ENCODE measurements at regions of chr1 and their contacts with region 1.

Region 1: GRCh38 chr1:229341774-229342655 is 832 bp downstream of the CCSAP start:
- DNase-seq: peak; percentile 93
- H3K4me3 Mint-ChIP-seq: peak overlapping the region; percentile 89
- H3K27ac Mint-ChIP-seq: peak overlapping the region; percentile 80
- H3K4me1 Mint-ChIP-seq: peaks cover 38% of the 10 kb centered on the region
- H3K27me3 Mint-ChIP-seq: peaks cover 21% of the 10 kb centered on the region
- CTCF ChIP-seq: no peak

Region 2: GRCh38 chr1:228998179-228998578 is 343.8 kb before region 1 on chr1:
- CTCF ChIA-PET with region 1: no interaction called
- POLR2A ChIA-PET with region 1: no interaction called
- intact Hi-C with region 1: no loop called
- DNase-seq: no peak
- H3K4me3 Mint-ChIP-seq: no peak overlapping the region
- H3K27ac Mint-ChIP-seq: no peak overlapping the region
- H3K4me1 Mint-ChIP-seq: peaks cover 17% of the 10 kb centered on the region
- H3K27me3 Mint-ChIP-seq: no peaks in the 10 kb centered on the region
- CTCF ChIP-seq: no peak

Region 3: GRCh38 chr1:229300099-229300757 is 41.8 kb before region 1 on chr1:
- CTCF ChIA-PET with region 1: no interaction called
- POLR2A ChIA-PET with region 1: no interaction called
- intact Hi-C with region 1: no loop called
- DNase-seq: peak; percentile 23
- H3K4me3 Mint-ChIP-seq: no peak overlapping the region
- H3K27ac Mint-ChIP-seq: peak overlapping the region; percentile 0
- H3K4me1 Mint-ChIP-seq: peaks cover 6% of the 10 kb centered on the region
- H3K27me3 Mint-ChIP-seq: no peaks in the 10 kb centered on the region
- CTCF ChIP-seq: no peak

Region 4: DNA sequence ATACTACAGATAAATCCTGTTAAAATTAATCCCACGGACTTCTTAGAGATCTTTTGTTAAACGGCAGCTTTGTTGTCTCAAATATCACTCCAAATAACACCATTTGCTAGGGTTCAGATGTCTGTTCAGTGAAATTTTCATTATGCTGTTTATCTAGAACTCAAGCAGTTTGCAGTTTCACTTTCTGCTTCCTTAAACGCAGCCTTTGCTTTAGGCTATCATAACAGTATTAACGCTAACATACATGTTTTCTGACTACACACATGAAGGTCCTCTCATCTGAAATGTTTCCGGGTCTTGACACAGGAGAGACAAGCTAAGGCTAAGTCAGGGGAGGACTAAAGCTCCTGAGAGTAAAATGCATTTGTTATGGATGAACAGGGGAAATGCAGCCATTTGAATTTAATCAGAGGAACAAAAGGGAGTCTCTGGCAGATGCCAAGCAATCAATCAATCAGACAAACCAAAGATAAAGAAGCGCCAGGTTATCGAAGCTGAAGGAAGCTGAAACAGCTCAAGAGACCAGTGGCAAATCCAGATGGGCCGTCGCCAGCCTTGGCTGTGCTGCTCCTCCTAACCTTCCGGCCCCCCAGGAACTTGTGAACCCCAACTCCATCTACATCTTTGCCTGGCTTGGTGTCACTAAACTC is 16.0 kb before region 1 on chr1:
- CTCF ChIA-PET with region 1: interaction called, 5 read pairs
- POLR2A ChIA-PET with region 1: interaction called, 11 read pairs
- intact Hi-C with region 1: no loop called
- DNase-seq: no peak
- H3K4me3 Mint-ChIP-seq: no peak overlapping the region
- H3K27ac Mint-ChIP-seq: no peak overlapping the region
- H3K4me1 Mint-ChIP-seq: no peaks in the 10 kb centered on the region
- H3K27me3 Mint-ChIP-seq: no peaks in the 10 kb centered on the region
- CTCF ChIP-seq: no peak

Region 5: GRCh38 chr1:229410692-229411443 is 68.9 kb after region 1 on chr1:
- CTCF ChIA-PET with region 1: interaction called, 5 read pairs
- POLR2A ChIA-PET with region 1: interaction called, 4 read pairs
- intact Hi-C with region 1: loop called (anchors 10 kb)
- DNase-seq: peak; percentile 74
- H3K4me3 Mint-ChIP-seq: no peak overlapping the region
- H3K27ac Mint-ChIP-seq: no peak overlapping the region
- H3K4me1 Mint-ChIP-seq: peaks cover 7% of the 10 kb centered on the region
- H3K27me3 Mint-ChIP-seq: peaks cover 33% of the 10 kb centered on the region
- CTCF ChIP-seq: no peak

Region 6: GRCh38 chr1:229636042-229636441 is 294.0 kb after region 1 on chr1:
- CTCF ChIA-PET with region 1: no interaction called
- POLR2A ChIA-PET with region 1: no interaction called
- intact Hi-C with region 1: no loop called
- DNase-seq: no peak
- H3K4me3 Mint-ChIP-seq: no peak overlapping the region
- H3K27ac Mint-ChIP-seq: no peak overlapping the region
- H3K4me1 Mint-ChIP-seq: peaks cover 3% of the 10 kb centered on the region
- H3K27me3 Mint-ChIP-seq: no peaks in the 10 kb centered on the region
- CTCF ChIP-seq: no peak

Measured in MCF 10A (cell line).